AG04450 (cell line): ENCODE measurements at regions of chr14 and their contacts with region 1.

Region 1: GRCh38 chr14:58199726-58200479 is at the start of gene ACTR10:
- DNase-seq: no peak
- H3K4me3 ChIP-seq: peak within 1 kb of the TSS; percentile 87
- H3K27ac ChIP-seq: peak within 1 kb of the TSS; percentile 87
- H3K27me3 ChIP-seq: no peaks in the 10 kb centered on the region
- CTCF ChIP-seq: no peak
- polyA plus RNA-seq, gene ACTR10: 99.9 and 142 TPM in 2 replicates

Region 2: GRCh38 chr14:58177125-58177524 is 22.8 kb before region 1 on chr14:
- CTCF ChIA-PET with region 1: no interaction called
- POLR2A ChIA-PET with region 1: interaction called, 13 read pairs
- DNase-seq: no peak
- H3K4me3 ChIP-seq: no peak overlapping the region
- H3K27ac ChIP-seq: no peak overlapping the region
- H3K27me3 ChIP-seq: no peaks in the 10 kb centered on the region
- CTCF ChIP-seq: no peak

Region 3: DNA sequence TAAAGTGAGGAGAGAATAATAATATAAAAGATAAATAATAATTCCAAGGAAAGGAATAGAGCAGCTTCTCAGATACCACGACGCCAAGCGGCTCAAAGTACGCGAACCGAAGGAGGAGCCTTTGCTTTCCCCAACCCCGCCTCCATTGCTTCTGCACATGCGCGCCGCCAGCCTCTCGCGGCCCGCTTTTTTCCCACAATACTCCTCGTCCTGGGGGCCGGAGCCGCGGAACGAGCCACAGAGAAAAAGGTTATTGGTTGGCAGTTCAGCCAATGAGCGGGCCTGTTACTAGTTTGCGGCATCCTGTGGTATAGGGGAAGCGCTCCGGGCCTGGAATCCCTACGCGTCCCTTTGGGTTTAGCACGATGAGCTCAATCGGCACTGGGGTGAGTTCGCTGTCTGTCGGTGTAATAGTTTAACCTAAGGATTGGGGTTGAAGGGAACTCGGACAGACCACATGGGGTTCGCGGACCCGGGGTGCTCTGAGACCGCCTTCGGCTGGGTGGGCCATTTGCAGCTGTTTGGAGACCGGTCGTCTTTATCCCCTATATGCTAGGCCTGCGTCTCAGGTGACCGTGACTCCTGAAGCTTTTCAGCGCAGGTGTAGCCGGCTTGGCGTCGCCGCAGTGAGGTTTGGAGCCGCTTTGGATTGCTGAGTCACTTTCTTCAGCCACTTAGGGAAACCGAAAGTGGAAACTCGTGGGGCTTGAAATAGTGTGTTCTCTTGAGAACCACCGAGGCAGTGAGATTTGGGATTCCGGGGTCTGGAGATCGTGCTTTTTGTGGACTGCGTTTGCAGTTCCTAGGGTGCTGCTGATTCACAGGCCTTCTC is 44.9 kb after region 1 on chr14 and contains the start of gene PSMA3:
- CTCF ChIA-PET with region 1: interaction called, 3 read pairs
- POLR2A ChIA-PET with region 1: interaction called, 11 read pairs
- DNase-seq: peak; percentile 90
- H3K4me3 ChIP-seq: peak within 1 kb of the TSS; percentile 96
- H3K27ac ChIP-seq: peak within 1 kb of the TSS; percentile 99
- H3K27me3 ChIP-seq: no peaks in the 10 kb centered on the region
- CTCF ChIP-seq: no peak; the same call in 1 of the 2 replicates
- polyA plus RNA-seq, gene PSMA3: 266 and 318 TPM in 2 replicates